CD8-positive, alpha-beta T cell (primary cell): ENCODE measurements at regions of chr1 and their contacts with region 1.

Region 1: DNA sequence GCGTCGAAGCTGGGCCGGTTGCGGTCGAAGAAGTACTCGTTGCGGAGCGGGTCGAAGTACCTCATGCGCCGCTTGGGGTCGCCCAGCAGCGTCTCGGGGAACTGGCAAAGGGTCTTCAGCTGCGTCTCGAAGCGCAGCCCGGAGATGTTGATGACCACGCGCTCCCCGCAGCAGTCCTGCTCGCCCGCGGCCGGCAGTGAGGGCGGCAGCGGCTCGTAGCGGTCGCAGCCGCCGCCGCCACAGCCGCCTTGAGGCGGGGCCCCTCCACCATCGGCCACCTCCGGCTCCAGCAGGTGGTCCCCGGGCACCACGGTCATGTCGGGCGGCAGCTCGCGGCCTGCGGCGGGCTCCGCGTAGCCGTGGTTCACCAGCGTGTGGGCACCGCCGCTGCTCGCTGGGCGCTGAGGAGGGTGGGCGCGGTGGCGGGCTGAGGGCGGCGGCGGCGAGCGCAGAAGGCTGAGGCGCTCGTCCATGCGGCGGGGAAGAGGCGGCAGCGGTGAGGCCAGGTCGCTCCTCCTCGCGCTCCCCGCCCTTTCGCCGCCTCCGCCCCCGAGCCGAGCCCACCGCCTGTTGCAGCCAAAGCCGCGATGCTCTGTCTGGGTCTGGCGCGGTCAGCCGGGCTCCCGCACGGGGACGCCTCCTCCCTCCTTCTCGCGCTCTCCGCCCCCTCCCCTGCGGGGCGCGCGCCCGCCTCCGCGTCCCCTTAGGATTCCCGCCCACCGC is at the start of gene KCNA3:
- DNase-seq: peak; percentile 52 to 87 (median 73)
- ATAC-seq: peak; percentile 42
- H3K4me3 ChIP-seq: peak within 1 kb of the TSS; percentile 75 to 97
- H3K4me3 Mint-ChIP-seq: peak within 1 kb of the TSS; percentile 100
- H3K27ac ChIP-seq: peak within 1 kb of the TSS; percentile 93 to 95
- H3K27ac Mint-ChIP-seq: peak within 1 kb of the TSS; percentile 99
- H3K4me1 ChIP-seq: peaks cover 22% of the 10 kb centered on the region
- H3K4me1 Mint-ChIP-seq: peaks cover 40% of the 10 kb centered on the region
- H3K27me3 ChIP-seq: no peaks in the 10 kb centered on the region
- H3K27me3 Mint-ChIP-seq: no peaks in the 10 kb centered on the region
- CTCF ChIP-seq: peak; percentile 28
- total RNA-seq, gene KCNA3: 83.6 to 85.1 TPM

Region 2: DNA sequence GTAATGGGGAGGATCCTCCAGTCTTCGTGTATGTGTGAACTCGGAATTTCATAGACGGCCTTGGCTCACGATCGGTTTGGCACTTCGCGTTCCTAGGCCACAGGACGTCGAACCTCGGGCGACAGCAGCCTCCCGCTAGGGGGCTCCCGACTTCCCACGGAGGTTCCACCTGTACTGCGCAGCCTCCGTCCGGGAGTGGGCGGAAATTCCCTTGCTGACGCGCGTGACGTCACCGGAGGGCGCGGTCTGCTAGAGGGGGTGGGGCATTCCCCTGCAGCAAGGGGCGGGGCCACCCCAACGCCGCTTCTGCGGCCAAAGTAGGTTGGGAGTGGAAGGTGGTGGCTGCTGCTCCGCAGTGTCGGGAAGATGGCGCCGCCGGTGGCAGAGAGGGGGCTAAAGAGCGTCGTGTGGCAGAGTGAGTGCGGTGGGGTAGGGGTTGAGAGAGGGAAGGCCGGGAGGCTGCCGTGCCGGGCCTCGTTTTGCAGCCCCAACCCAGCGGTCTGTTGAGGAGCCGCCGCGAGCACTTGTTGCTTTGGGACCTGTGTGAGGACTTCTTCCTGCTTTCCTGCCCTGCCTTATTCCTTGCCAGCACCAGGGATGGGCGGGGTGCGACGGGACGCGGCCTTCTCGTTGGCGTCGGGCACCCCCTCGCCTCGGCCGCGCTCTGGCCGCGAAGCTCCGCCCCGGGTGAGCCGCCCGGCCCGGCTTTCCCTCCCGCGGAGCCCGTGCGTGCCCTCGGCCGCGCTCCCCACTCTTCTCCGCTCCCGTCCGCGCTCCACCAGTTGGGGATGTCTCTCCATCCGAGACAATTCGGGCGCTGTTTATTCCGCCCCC is 1927.9 kb before region 1 on chr1 and contains the start of gene STXBP3:
- CTCF ChIA-PET with region 1: no interaction called
- POLR2A ChIA-PET with region 1: no interaction called
- intact Hi-C with region 1: loop called in 1 of 2 experiments (anchors 10 kb)
- DNase-seq: peak; percentile 99 to 100 (median 100)
- ATAC-seq: peak; percentile 92
- H3K4me3 ChIP-seq: peak within 1 kb of the TSS; percentile 72 to 98
- H3K4me3 Mint-ChIP-seq: peak within 1 kb of the TSS; percentile 98
- H3K27ac ChIP-seq: peak within 1 kb of the TSS; percentile 82 to 97
- H3K27ac Mint-ChIP-seq: peak within 1 kb of the TSS; percentile 99
- H3K4me1 ChIP-seq: peaks cover 26% of the 10 kb centered on the region
- H3K4me1 Mint-ChIP-seq: peaks cover 34% of the 10 kb centered on the region
- H3K27me3 ChIP-seq: no peaks in the 10 kb centered on the region
- H3K27me3 Mint-ChIP-seq: no peaks in the 10 kb centered on the region
- CTCF ChIP-seq: peak; percentile 84
- total RNA-seq, gene STXBP3: 49.0 to 50.4 TPM

Region 3: GRCh38 chr1:109864047-109864822 is 810.3 kb before region 1 on chr1:
- CTCF ChIA-PET with region 1: no interaction called
- POLR2A ChIA-PET with region 1: no interaction called
- intact Hi-C with region 1: no loop called
- DNase-seq: peak in 1 of 9 experiments; percentile 16
- ATAC-seq: no peak
- H3K4me3 ChIP-seq: no peak overlapping the region
- H3K4me3 Mint-ChIP-seq: no peak overlapping the region
- H3K27ac ChIP-seq: no peak overlapping the region
- H3K27ac Mint-ChIP-seq: no peak overlapping the region
- H3K4me1 ChIP-seq: no peaks in the 10 kb centered on the region
- H3K4me1 Mint-ChIP-seq: peaks cover 6% of the 10 kb centered on the region
- H3K27me3 ChIP-seq: no peaks in the 10 kb centered on the region
- H3K27me3 Mint-ChIP-seq: no peaks in the 10 kb centered on the region
- CTCF ChIP-seq: no peak

Region 4: DNA sequence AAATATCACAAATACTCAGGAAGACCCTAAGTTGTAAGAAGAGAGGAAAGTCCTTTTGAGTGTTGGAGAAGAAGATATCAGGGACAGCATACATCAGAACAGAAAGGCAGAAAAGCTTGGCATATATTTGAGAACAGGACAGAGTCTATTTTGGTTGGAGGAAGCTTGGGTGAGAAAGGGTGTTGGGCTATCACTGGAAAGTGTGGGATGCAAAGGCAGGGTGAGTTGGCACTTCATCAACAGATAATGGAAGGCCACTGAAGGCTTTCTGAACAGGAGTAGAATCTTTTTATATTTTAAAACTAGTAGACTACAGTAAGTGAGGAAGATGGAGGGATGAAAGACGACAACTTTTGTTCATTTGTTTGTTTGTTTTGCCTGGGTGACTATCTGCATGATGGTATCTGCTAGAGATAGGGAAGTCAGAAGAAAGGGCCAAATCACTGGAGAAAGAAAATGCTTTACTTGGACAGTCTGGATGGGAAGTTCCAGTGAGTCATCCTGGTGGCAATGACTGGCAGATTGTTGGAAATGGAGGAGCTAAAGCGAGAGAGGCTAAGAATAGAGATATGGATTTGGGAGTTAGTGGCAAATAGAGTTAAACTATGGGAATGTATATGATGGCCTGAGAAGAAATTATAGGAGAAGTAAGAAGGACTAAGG is 34.6 kb before region 1 on chr1:
- CTCF ChIA-PET with region 1: interaction called, 16 read pairs
- POLR2A ChIA-PET with region 1: interaction called, 50 read pairs
- intact Hi-C with region 1: no loop called
- DNase-seq: no peak
- ATAC-seq: no peak
- H3K4me3 ChIP-seq: no peak overlapping the region
- H3K4me3 Mint-ChIP-seq: no peak overlapping the region
- H3K27ac ChIP-seq: peak overlapping the region in 1 of 2 experiments; percentile 59
- H3K27ac Mint-ChIP-seq: peak overlapping the region; percentile 83
- H3K4me1 ChIP-seq: peaks cover 90% of the 10 kb centered on the region
- H3K4me1 Mint-ChIP-seq: peaks cover 91% of the 10 kb centered on the region
- H3K27me3 ChIP-seq: no peaks in the 10 kb centered on the region
- H3K27me3 Mint-ChIP-seq: no peaks in the 10 kb centered on the region
- CTCF ChIP-seq: no peak

Region 5: GRCh38 chr1:110746579-110747160 is 72.2 kb after region 1 on chr1:
- CTCF ChIA-PET with region 1: no interaction called
- POLR2A ChIA-PET with region 1: no interaction called
- intact Hi-C with region 1: loop called in 1 of 2 experiments (anchors 5 kb)
- DNase-seq: peak; percentile 26 to 77 (median 60)
- ATAC-seq: peak; percentile 52
- H3K4me3 ChIP-seq: no peak overlapping the region
- H3K4me3 Mint-ChIP-seq: no peak overlapping the region
- H3K27ac ChIP-seq: no peak overlapping the region
- H3K27ac Mint-ChIP-seq: no peak overlapping the region
- H3K4me1 ChIP-seq: no peaks in the 10 kb centered on the region
- H3K4me1 Mint-ChIP-seq: no peaks in the 10 kb centered on the region
- H3K27me3 ChIP-seq: no peaks in the 10 kb centered on the region
- H3K27me3 Mint-ChIP-seq: peaks cover 25% of the 10 kb centered on the region
- CTCF ChIP-seq: no peak

Region 6: GRCh38 chr1:110963691-110964399 is 289.3 kb after region 1 on chr1 and contains the start of gene LRIF1:
- CTCF ChIA-PET with region 1: no interaction called
- POLR2A ChIA-PET with region 1: interaction called, 5 read pairs
- intact Hi-C with region 1: loop called (anchors 5 kb)
- DNase-seq: peak; percentile 98 to 100 (median 100)
- ATAC-seq: peak; percentile 96
- H3K4me3 ChIP-seq: peak within 1 kb of the TSS; percentile 77 to 88
- H3K4me3 Mint-ChIP-seq: peak within 1 kb of the TSS; percentile 84
- H3K27ac ChIP-seq: peak within 1 kb of the TSS; percentile 98 to 99
- H3K27ac Mint-ChIP-seq: peak within 1 kb of the TSS; percentile 99
- H3K4me1 ChIP-seq: peaks cover 21% of the 10 kb centered on the region
- H3K4me1 Mint-ChIP-seq: peaks cover 33% of the 10 kb centered on the region
- H3K27me3 ChIP-seq: peaks cover 0 to 2% of the 10 kb centered on the region in 2 experiments
- H3K27me3 Mint-ChIP-seq: peaks cover 10% of the 10 kb centered on the region
- CTCF ChIP-seq: peak; percentile 59
- total RNA-seq, gene LRIF1: 1.8 to 1.9 TPM

Region 7: DNA sequence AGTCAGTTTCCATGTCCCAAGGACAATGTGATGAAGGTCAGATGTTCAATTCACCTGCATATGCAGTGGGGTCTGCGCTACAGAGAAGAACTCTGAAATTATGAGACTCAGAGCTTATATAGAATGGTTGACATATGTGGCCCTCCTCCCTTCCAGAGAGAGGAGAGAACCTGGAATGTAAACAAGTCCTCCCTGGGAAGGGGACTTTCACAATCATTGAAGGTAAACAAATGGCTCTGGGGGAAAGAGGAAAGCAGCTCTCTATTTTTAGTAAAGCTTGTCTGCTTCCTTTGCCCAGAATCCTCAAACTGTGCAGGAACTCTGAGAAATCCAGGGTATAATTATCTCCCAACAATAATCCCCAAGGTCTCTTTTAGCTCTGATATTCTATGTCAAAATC is 743.3 kb after region 1 on chr1:
- CTCF ChIA-PET with region 1: no interaction called
- POLR2A ChIA-PET with region 1: no interaction called
- intact Hi-C with region 1: no loop called
- DNase-seq: no peak
- ATAC-seq: no peak
- H3K4me3 ChIP-seq: no peak overlapping the region
- H3K4me3 Mint-ChIP-seq: no peak overlapping the region
- H3K27ac ChIP-seq: no peak overlapping the region
- H3K27ac Mint-ChIP-seq: no peak overlapping the region
- H3K4me1 ChIP-seq: no peaks in the 10 kb centered on the region
- H3K4me1 Mint-ChIP-seq: no peaks in the 10 kb centered on the region
- H3K27me3 ChIP-seq: no peaks in the 10 kb centered on the region
- H3K27me3 Mint-ChIP-seq: no peaks in the 10 kb centered on the region
- CTCF ChIP-seq: no peak

Region 8: DNA sequence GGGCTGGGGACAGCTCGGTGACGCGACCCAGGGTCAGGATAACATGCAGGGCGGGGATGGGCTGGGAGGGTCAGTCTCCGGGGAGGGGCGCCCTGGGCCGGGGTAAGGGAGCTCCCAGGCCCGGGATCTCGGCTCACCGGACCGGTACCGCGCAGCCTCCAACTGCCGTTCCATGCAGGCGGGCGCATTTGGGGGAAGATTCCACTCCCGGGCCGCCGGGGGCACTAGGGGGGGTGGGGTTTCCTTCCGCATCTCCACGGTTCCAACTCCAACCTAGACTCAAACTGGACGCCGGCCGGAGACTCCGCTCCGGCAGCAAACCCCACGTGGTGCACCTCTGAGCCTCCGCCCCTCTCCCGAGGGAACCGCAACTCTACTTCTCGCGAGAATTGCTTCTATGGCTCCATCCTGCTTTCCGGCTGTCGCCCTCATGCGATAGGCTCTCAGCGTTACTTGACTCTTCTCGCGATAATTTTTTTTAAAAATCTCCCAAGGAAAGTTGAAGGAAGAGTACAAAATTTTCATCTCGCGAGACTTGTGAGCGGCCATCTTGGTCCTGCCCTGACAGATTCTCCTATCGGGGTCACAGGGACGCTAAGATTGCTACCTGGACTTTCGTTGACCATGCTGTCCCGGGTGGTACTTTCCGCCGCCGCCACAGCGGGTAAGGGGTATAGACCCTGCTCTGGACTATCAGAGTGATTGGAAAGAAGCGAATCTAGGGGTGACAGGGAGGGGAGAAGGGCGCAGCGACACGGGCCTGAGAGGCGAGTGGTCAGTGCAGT is 774.6 kb after region 1 on chr1 and contains the starts of genes ATP5PB and WDR77:
- CTCF ChIA-PET with region 1: no interaction called
- POLR2A ChIA-PET with region 1: no interaction called
- intact Hi-C with region 1: loop called in 1 of 2 experiments (anchors 5 kb)
- DNase-seq: peak; percentile 75 to 98 (median 89)
- ATAC-seq: peak; percentile 94
- H3K4me3 ChIP-seq: peak within 1 kb of the TSS; percentile 77 to 86
- H3K4me3 Mint-ChIP-seq: peak within 1 kb of the TSS; percentile 99
- H3K27ac ChIP-seq: peak within 1 kb of the TSS; percentile 75 to 83
- H3K27ac Mint-ChIP-seq: peak within 1 kb of the TSS; percentile 98
- H3K4me1 ChIP-seq: peaks cover 58% of the 10 kb centered on the region
- H3K4me1 Mint-ChIP-seq: peaks cover 84% of the 10 kb centered on the region
- H3K27me3 ChIP-seq: no peaks in the 10 kb centered on the region
- H3K27me3 Mint-ChIP-seq: no peaks in the 10 kb centered on the region
- CTCF ChIP-seq: no peak
- total RNA-seq, gene ATP5PB: 59.9 to 64.6 TPM
- total RNA-seq, gene WDR77: 9.5 to 11.4 TPM